ENCODE measurements at regions of chr1 and their contacts with region 1.

Region 1: DNA sequence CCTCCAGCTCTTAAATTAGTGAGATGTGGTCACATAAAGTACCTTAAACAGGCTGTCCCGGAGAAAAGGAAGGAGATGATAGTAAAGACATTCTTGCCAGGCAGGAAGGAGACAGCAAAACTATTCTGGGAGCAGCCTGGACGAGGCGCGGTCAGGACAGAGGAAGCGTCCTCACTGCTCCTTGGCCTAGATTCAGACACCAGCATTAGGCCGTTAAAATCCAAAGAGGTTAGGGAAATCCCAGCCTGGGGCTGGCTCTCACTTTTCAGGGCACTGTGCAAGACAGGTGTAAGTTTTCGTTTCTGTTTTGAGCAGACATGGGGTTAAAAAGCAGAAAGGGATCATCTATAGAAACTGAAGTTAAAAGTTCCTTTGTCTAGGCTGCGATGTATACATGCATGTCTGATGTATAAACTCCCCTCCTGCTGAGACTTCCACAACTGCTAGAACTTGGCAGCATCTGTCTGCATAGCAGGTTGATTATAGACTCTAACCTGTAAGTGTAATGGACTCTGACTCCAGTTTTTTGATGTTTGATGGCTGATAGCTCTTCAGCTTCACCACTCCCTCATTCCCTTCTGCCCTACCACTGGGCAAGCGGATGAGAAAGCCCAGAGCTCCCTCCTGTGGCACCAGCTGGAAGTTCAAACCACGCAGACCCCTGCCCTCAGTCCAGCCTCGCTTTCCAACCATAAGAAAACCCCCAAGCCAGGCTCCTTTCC is 21.5 kb downstream of the STPG1 start:
- DNase-seq: peak; percentile 89
- H3K4me3 ChIP-seq: peak overlapping the region; percentile 58
- H3K27ac ChIP-seq: peak overlapping the region; percentile 88
- H3K4me1 ChIP-seq: peaks cover 44% of the 10 kb centered on the region
- CTCF ChIP-seq: peak; percentile 92

Region 2: GRCh38 chr1:24070821-24071393 is 321.1 kb before region 1 on chr1:
- CTCF ChIA-PET with region 1: interaction called, 4 read pairs
- POLR2A ChIA-PET with region 1: no interaction called
- intact Hi-C with region 1: loop called (anchors 1 kb)
- DNase-seq: peak; percentile 87
- H3K4me3 ChIP-seq: no peak overlapping the region
- H3K27ac ChIP-seq: no peak overlapping the region
- H3K4me1 ChIP-seq: peaks cover 8% of the 10 kb centered on the region
- CTCF ChIP-seq: peak; percentile 95

Region 3: DNA sequence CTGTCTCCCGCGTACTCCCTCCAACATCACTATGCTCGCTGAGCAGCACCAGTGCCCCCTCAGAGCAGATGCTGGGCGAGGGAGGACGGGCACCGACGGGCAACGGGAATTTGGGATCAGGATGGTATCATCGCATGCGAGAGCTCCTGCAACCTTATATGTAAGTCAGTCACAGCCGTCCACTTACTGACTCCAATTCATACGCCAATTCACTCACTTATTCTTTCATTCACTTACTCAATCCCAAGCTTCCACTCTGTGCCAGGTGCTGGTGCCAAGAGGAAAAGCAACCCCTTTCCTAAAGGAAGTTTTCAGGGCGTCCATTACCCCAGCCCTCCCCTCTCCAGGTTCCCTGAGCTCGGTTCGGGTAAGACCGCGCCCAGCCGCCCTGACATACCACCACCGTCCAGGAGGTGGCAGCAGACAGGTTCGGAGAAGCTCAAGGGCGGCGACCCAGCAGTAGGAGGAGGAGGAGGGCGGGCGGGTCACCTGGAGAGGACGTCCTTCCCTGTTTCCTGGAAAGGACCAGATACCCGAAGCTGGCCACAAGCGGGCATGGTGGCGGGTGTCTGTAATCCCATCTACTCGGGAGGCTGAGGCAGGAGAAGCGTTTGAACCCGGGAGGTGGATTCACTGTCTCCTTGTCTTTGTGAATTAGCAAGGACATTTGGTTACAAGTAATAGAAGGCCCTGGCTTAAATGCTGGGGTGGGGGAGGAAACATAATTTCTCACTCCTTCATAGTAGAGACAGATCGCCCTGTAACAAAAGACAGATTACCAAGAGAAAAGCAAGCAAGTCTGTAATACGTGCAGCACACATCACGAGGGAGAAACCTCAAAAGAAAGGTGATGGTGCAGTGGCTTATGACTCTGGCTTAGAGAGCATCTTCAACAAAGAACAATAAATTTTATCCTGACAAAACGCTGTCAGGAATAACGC is 241.5 kb before region 1 on chr1:
- CTCF ChIA-PET with region 1: interaction called, 17 read pairs
- POLR2A ChIA-PET with region 1: interaction called, 7 read pairs
- intact Hi-C with region 1: loop called (anchors 1 kb)
- DNase-seq: peak; percentile 82
- H3K4me3 ChIP-seq: peak overlapping the region; percentile 47
- H3K27ac ChIP-seq: no peak overlapping the region
- H3K4me1 ChIP-seq: peaks cover 36% of the 10 kb centered on the region
- CTCF ChIP-seq: peak; percentile 88

Region 4: GRCh38 chr1:24179251-24179840 is 212.7 kb before region 1 on chr1:
- CTCF ChIA-PET with region 1: no interaction called
- POLR2A ChIA-PET with region 1: no interaction called
- intact Hi-C with region 1: no loop called
- DNase-seq: no peak
- H3K4me3 ChIP-seq: no peak overlapping the region
- H3K27ac ChIP-seq: no peak overlapping the region
- H3K4me1 ChIP-seq: peaks cover 16% of the 10 kb centered on the region
- CTCF ChIP-seq: no peak

Region 5: DNA sequence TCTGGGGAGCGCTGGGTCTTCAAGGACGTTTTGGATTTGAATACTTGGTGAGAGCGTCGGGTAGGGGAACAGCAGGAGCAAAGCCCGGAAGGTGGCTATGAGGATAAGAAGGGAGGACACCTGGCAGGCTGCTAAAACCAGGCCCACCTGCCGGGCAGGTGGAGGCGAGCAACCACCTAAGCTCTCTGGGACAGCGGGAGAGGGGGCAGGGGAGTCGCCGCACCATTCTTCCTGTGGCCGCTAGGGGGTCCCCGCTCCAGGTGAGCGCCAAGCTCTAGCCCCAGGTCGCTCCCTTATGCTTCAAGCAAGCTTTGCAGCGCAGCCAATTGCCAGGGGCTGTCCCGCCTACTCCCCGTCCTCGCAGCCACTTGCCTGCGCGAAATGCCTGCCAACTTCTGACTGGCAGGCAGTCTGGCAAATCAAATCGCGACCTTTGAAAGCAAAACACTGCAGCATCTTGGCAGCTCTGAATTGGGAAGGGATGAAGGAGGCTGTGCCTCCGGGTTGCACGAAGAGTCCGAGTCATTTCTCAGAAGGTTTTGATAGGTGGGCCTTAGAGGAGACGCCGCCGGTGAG is 23.4 kb after region 1 on chr1 and contains the start of gene NIPAL3:
- CTCF ChIA-PET with region 1: interaction called, 3 read pairs
- POLR2A ChIA-PET with region 1: interaction called, 10 read pairs
- intact Hi-C with region 1: no loop called
- DNase-seq: peak; percentile 100
- H3K4me3 ChIP-seq: peak within 1 kb of the TSS; percentile 79
- H3K27ac ChIP-seq: no peak within 1 kb of the TSS
- H3K4me1 ChIP-seq: peaks cover 34% of the 10 kb centered on the region
- CTCF ChIP-seq: peak; percentile 75
- total RNA-seq, gene NIPAL3: 6.7 and 11.7 TPM in 2 replicates

Region 6: DNA sequence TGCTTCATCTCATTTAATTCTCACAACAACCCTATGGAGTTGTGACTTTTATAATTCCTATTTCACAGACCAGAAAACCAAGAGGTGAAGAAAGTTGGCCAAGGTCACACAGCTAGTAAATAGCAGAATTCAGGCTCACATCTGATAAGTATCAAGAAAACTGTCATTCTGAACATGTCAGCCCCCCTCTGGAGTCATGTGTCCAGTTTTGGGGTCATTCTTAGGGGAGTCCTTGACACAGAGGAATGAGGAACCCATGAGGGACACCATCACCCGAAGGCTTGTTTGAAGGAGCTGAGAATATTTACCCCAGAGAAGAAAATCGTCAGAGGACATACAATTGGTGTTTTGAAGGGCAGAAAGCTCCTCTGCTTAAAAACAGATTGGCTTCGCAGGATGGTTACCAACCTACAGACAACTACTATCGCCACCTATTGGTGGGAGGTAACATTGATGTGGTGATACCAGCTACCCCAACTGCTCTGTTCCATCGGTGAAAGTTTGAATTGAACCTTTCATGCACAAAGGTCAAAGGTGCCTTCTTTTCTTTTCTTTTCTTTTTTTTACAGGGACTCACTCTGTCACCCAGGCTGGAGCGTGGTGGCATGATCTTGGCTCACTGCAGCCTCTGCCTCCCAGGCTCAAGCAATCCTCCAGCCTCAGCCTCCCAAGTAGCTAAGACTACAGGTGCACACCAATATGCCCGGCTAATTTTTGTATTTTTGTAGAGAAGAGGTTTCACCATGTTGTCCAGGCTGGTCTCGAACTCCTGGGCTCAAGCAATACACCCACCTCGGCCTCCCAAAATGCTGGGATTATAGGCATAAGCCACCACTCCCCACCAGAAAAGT is 195.2 kb after region 1 on chr1:
- CTCF ChIA-PET with region 1: no interaction called
- POLR2A ChIA-PET with region 1: no interaction called
- intact Hi-C with region 1: loop called (anchors 1 kb)
- DNase-seq: peak; percentile 88
- H3K4me3 ChIP-seq: no peak overlapping the region
- H3K27ac ChIP-seq: no peak overlapping the region
- H3K4me1 ChIP-seq: peaks cover 11% of the 10 kb centered on the region
- CTCF ChIP-seq: peak; percentile 91

Region 7: DNA sequence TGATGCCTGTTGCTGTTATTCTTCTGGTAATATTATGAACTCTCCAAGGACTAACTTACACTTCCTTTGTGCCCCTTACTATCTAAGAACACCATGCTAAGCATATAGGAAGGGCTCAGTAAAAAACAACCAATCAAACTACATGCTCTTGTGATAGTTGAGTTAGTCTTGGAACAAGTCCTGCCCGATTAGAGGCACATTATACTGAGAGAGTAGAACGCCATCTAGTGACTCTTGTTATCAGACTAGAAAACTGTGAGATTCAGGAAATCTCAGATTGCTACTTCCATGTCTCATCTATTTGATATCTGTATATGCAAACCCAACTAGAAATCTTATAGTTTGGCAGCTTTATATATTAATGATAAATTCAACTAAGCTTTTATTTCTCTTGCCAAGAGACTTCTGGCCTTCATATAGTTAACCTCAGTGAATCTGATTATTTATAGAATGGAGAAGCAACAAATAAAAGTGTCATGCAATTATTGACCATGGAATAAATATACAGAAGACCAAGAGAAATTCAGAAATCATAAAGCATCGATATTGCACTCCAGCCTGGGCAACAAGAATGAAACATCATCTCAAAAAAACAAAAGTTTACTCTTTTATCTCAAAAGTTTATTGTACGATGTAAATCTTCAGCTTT is 243.3 kb after region 1 on chr1:
- CTCF ChIA-PET with region 1: no interaction called
- POLR2A ChIA-PET with region 1: no interaction called
- intact Hi-C with region 1: loop called (anchors 1 kb)
- DNase-seq: peak; percentile 86
- H3K4me3 ChIP-seq: no peak overlapping the region
- H3K27ac ChIP-seq: no peak overlapping the region
- H3K4me1 ChIP-seq: peaks cover 4% of the 10 kb centered on the region
- CTCF ChIP-seq: peak; percentile 97

Measured in OCI-LY7 (cell line).